ENCODE measurements at regions of chr7 and their contacts with region 1.

Region 1: GRCh38 chr7:150898475-150899011 is 46.2 kb downstream of the AOC1 start:
- DNase-seq: peak; percentile 77 to 91 (median 86)
- H3K4me3 ChIP-seq: peak overlapping the region in 2 of 59 donors; percentile 2 to 4
- H3K27ac ChIP-seq: no peak overlapping the region
- H3K27me3 ChIP-seq: peaks cover 0 to 27% (median 3%) of the 10 kb centered on the region in 45 donors
- CTCF ChIP-seq: peak; percentile 88 to 99 (median 97)

Region 2: DNA sequence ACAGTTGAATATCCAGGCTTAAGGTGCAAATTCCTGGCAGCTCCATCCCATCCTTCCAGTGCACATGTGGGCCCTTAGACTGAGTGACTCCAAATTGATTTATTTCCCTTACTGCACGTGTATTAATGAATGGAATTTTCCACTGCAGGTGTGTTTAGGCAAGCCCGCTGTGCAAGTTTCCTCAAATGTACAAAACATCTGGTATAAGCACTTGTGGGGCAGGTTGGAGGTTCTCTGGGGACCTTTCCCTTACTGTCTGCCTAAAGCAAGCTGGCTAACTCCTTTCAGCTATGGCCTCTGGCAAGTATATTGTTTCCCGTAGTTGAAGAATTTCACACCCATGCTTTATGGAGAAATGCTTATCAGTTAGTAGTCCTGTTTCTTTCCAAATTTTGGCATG is 241.0 kb before region 1 on chr7:
- intact Hi-C with region 1: no loop called
- DNase-seq: no peak
- H3K4me3 ChIP-seq: no peak overlapping the region
- H3K27ac ChIP-seq: no peak overlapping the region
- H3K27me3 ChIP-seq: peaks cover 0 to 9% (median 0%) of the 10 kb centered on the region in 45 donors
- CTCF ChIP-seq: no peak

Region 3: GRCh38 chr7:150962553-150963399 is 64.2 kb after region 1 on chr7:
- intact Hi-C with region 1: loop called in 1 of 2 experiments (anchors 5 kb)
- DNase-seq: peak in 9 of 10 donors; percentile 53 to 82 (median 66)
- H3K4me3 ChIP-seq: no peak overlapping the region
- H3K27ac ChIP-seq: peak overlapping the region in 1 of 59 donors; percentile 89
- H3K27me3 ChIP-seq: no peaks in the 10 kb centered on the region
- CTCF ChIP-seq: peak in 55 of 56 donors; percentile 31 to 97 (median 88)

Region 4: DNA sequence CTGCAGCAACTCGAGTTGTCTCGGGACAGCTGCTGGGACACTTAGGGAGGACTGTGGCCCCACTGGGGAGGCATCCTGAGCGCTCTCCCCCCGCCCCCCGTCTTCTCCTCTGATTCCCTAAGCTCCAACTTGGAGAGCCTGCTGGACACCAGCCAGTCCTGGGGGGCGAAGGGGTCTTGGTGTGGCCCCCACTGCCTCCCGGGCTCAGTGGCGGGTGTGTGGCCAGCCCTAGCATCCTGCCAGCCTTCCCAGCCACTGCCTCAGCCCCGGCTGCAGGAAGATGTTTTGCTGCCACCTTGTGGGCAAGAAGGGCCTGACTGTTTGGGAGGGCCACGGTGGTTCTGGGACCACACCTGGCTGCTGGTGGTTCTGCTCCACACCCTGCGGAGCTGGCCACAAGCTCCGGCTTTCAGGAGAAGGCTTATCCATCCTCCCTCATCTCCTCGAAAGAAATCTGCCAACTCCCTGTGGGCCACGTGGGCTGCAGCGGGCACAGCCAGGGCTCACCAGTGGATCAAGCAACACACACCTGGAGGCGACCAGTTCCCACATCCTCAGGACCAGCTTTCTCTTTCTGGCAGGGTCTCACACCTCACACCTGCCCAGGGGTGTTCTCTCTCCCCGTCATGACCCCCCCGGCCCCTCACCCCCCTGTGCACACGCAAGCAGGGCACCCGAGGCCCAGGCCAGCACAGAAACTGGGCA is 212.6 kb after region 1 on chr7:
- intact Hi-C with region 1: loop called in 1 of 2 experiments (anchors 10 kb)
- DNase-seq: peak; percentile 65 to 86 (median 77)
- H3K4me3 ChIP-seq: peak overlapping the region in 5 of 59 donors; percentile 7 to 29 (median 10)
- H3K27ac ChIP-seq: peak overlapping the region in 7 of 59 donors; percentile 2 to 44 (median 16)
- H3K27me3 ChIP-seq: no peaks in the 10 kb centered on the region
- CTCF ChIP-seq: peak; percentile 63 to 96 (median 91)

Measured in dorsolateral prefrontal cortex (tissue), 120 donors.